A673 (cell line): ENCODE measurements at regions of chrX and their contacts with region 1.

Region 1: GRCh38 chrX:129310000-129310399 is 213.3 kb downstream of the SMARCA1 start:
- DNase-seq: no peak
- H3K4me3 ChIP-seq: no peak overlapping the region
- H3K27ac ChIP-seq: no peak overlapping the region
- H3K4me1 ChIP-seq: no peaks in the 10 kb centered on the region
- H3K27me3 ChIP-seq: no peaks in the 10 kb centered on the region
- CTCF ChIP-seq: no peak

Region 2: DNA sequence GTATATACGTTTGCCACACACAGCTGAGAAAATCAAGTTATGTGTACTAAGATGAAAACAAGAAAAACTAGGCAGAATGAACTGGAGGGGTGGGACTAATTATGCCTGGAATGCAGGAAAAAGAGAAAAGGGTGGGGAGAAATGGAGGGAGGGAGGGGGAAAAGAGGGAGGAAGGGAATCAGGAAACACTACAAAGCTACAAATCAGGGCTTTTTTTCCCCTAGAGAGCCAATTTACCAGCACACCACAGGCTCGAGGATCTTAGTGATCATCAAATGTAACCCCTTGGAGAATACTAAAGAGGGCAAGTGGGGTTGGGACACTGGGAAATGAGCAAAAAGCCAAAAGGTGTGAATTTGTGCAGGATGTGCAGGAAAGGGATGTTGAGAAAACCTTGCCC is 238.6 kb before region 1 on chrX:
- CTCF ChIA-PET with region 1: no interaction called
- POLR2A ChIA-PET with region 1: interaction called, 22 read pairs
- intact Hi-C with region 1: no loop called
- DNase-seq: no peak
- H3K4me3 ChIP-seq: no peak overlapping the region
- H3K27ac ChIP-seq: no peak overlapping the region
- H3K4me1 ChIP-seq: peaks cover under 1% of the 10 kb centered on the region
- H3K27me3 ChIP-seq: no peaks in the 10 kb centered on the region
- CTCF ChIP-seq: no peak

Region 3: GRCh38 chrX:129754056-129755024 is 444.3 kb after region 1 on chrX:
- CTCF ChIA-PET with region 1: no interaction called
- POLR2A ChIA-PET with region 1: no interaction called
- intact Hi-C with region 1: no loop called
- DNase-seq: no peak
- H3K4me3 ChIP-seq: no peak overlapping the region
- H3K27ac ChIP-seq: no peak overlapping the region
- H3K4me1 ChIP-seq: no peaks in the 10 kb centered on the region
- H3K27me3 ChIP-seq: no peaks in the 10 kb centered on the region
- CTCF ChIP-seq: peak; percentile 47